Natural killer cell (primary cell): ENCODE measurements at regions of chr1 and their contacts with region 1.

Region 1: DNA sequence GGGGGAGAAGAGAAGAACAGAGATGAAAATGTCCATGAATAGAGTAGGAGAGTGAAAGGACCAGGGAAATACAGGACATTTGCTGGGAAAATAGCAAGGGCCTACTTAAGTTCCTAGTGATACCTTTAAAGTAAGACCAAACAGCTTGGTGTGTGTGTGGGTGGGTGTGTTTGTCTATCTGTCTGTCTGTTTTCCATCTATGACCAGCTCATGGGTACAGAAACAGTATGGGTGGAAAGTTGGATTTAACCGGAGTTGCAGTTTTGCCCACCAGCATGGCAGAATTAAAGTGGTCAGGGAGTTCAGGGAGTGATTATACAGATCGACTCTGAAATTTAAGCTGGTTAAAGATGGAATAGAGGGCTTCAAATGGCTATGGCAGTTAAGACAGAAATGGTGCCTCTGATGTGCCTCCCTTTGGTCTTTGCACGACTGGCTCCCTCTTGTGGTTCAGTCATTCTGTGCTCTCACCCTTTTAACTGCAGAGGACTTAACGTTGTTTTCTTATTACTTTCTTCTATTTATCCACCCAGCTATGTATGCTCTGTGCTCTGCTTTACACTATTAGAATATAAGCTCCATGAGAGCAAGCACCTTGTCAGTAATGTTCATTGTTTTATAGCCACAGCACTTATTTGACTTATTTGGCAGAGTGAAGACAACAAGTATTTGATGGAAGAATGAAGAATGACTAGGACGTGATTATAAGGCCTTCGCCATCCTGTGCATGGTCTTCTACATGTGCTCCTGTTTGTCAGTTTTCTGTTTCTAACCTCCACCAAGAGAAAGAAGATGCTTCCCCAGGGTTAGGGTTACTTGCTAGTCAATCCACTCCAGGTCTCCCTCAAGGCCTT is 72.7 kb upstream of the AK4 start:
- DNase-seq: peak; percentile 45 to 89
- ATAC-seq: peak; percentile 91 to 99 (median 99)
- H3K4me3 ChIP-seq: no peak overlapping the region
- H3K4me3 Mint-ChIP-seq: no peak overlapping the region
- H3K27ac ChIP-seq: no peak overlapping the region
- H3K27ac Mint-ChIP-seq: no peak overlapping the region
- H3K4me1 ChIP-seq: no peaks in the 10 kb centered on the region
- H3K4me1 Mint-ChIP-seq: peaks cover 6 to 19% of the 10 kb centered on the region in 2 donors
- H3K27me3 ChIP-seq: no peaks in the 10 kb centered on the region
- H3K27me3 Mint-ChIP-seq: peaks cover 8 to 10% of the 10 kb centered on the region in 2 donors
- CTCF ChIP-seq: peak; percentile 76

Region 2: DNA sequence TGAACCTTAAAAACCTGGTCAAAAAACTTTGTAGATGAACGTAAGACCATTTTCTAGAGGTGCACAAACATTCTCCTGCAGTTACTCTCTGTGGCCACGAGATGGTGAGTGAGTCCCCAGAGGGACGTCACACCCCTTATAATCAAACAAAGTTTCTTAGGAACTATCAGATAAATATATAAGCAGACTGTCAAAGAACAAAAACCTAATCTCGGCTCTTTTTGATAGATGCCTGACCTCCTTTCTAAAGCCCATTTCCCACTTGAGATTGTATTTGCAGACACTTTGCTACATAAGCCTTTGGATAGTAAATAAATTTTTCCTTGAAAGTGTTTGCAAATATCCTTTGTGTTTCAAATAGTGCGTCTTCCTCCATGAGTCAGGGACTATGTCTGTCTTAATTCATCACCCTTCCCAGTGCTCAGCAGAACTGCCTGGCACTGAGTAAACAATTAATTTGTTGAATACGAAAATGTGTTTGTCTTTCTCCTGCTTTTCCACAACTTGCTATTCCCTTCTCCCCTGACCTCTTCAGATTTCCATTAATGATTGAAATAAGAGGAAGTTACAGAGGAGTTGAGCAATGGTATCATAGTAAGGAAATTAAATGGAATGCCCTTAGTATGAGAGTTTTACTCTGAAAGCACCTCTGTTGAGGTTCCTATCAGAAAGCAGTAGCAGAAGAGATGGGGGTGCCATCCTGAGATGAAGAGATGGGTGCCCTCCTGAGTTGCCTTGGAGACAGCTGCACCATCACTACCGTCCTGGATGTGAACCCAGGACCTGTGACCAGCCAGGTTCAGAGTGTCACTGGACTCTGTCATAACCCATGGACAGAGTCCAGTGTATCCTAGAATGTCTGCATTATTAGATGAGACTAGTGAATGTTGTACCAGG is 388.3 kb before region 1 on chr1:
- intact Hi-C with region 1: loop called (anchors 10 kb)
- DNase-seq: peak in 1 of 2 donors; percentile 71
- ATAC-seq: peak in 2 of 3 donors; percentile 72 to 78
- H3K4me3 ChIP-seq: no peak overlapping the region
- H3K4me3 Mint-ChIP-seq: no peak overlapping the region
- H3K27ac ChIP-seq: no peak overlapping the region
- H3K27ac Mint-ChIP-seq: no peak overlapping the region
- H3K4me1 ChIP-seq: no peaks in the 10 kb centered on the region
- H3K4me1 Mint-ChIP-seq: no peaks in the 10 kb centered on the region
- H3K27me3 ChIP-seq: no peaks in the 10 kb centered on the region
- H3K27me3 Mint-ChIP-seq: peaks cover 4 to 12% of the 10 kb centered on the region in 2 donors
- CTCF ChIP-seq: peak; percentile 76

Region 3: GRCh38 chr1:65059930-65060538 is 15.3 kb before region 1 on chr1:
- intact Hi-C with region 1: loop called (anchors 1 kb)
- DNase-seq: peak in 1 of 2 donors; percentile 63
- ATAC-seq: peak in 2 of 3 donors; percentile 59 to 66
- H3K4me3 ChIP-seq: no peak overlapping the region
- H3K4me3 Mint-ChIP-seq: no peak overlapping the region
- H3K27ac ChIP-seq: no peak overlapping the region
- H3K27ac Mint-ChIP-seq: no peak overlapping the region
- H3K4me1 ChIP-seq: no peaks in the 10 kb centered on the region
- H3K4me1 Mint-ChIP-seq: peaks cover 30 to 38% of the 10 kb centered on the region in 2 donors
- H3K27me3 ChIP-seq: no peaks in the 10 kb centered on the region
- H3K27me3 Mint-ChIP-seq: no peaks in the 10 kb centered on the region
- CTCF ChIP-seq: peak; percentile 70

Region 4: DNA sequence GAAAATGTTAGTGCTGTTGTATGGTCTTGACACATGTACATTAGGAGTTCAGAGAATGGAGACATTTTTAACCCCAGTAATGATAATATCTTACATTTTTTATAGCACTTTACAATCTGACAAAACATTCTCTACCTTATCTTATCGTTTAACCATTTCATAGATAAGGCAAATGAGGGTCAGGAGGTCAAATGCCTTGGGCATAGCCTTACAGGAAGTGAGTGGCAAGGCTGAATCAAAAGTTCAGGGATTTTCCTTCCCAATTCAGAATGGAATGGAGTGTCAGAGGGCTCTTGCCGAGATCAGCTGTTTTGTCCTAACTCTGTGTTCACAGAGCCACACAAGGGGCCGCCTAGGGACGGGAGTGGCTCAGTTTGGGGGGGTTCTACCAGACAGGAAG is 15.1 kb after region 1 on chr1:
- intact Hi-C with region 1: no loop called
- DNase-seq: no peak
- ATAC-seq: peak in 1 of 3 donors; percentile 38
- H3K4me3 ChIP-seq: no peak overlapping the region
- H3K4me3 Mint-ChIP-seq: no peak overlapping the region
- H3K27ac ChIP-seq: no peak overlapping the region
- H3K27ac Mint-ChIP-seq: no peak overlapping the region
- H3K4me1 ChIP-seq: peaks cover 5% of the 10 kb centered on the region
- H3K4me1 Mint-ChIP-seq: peaks cover 5 to 8% of the 10 kb centered on the region in 2 donors
- H3K27me3 ChIP-seq: no peaks in the 10 kb centered on the region
- H3K27me3 Mint-ChIP-seq: peaks cover under 1 to 7% of the 10 kb centered on the region in 2 donors
- CTCF ChIP-seq: no peak